Activated CD4-positive, alpha-beta memory T cell treated with anti-CD3 and anti-CD28 coated beads for 36 hours (primary cell): ENCODE measurements at regions of chr6 and their contacts with region 1.

Region 1: GRCh38 chr6:111737065-111737521 is 131.4 kb upstream of the TRAF3IP2 start:
- DNase-seq: peak; percentile 67
- H3K4me3 Mint-ChIP-seq: no peak overlapping the region
- H3K27ac Mint-ChIP-seq: peak overlapping the region; percentile 78
- H3K4me1 Mint-ChIP-seq: peaks cover 88% of the 10 kb centered on the region
- H3K27me3 Mint-ChIP-seq: no peaks in the 10 kb centered on the region

Region 2: GRCh38 chr6:111338843-111339242 is 398.2 kb before region 1 on chr6:
- CTCF ChIA-PET with region 1: no interaction called
- POLR2A ChIA-PET with region 1: no interaction called
- intact Hi-C with region 1: no loop called
- DNase-seq: peak; percentile 11
- H3K4me3 Mint-ChIP-seq: no peak overlapping the region
- H3K27ac Mint-ChIP-seq: peak overlapping the region; percentile 5
- H3K4me1 Mint-ChIP-seq: peaks cover 20% of the 10 kb centered on the region
- H3K27me3 Mint-ChIP-seq: no peaks in the 10 kb centered on the region

Region 3: DNA sequence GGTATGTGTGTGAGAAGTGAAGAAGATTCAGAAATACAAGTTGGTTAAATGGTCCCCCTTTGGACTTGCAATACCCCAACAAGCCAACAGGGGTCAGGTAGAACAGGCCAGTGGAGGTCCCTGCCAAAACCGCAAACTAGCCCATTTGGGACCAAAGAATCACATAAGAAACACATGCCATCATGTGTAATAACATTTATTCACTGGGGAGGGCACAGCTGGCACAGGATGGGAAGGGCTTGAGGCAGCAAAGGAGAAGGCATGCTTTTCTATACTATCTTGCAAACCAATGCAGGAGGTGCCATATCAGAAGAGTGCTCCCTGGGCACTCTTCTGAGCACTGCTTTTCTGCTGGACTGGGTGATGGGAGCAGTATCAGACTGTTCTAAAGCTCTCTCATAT is 15.3 kb before region 1 on chr6:
- CTCF ChIA-PET with region 1: interaction called, 19 read pairs
- POLR2A ChIA-PET with region 1: no interaction called
- intact Hi-C with region 1: no loop called
- DNase-seq: peak; percentile 63
- H3K4me3 Mint-ChIP-seq: no peak overlapping the region
- H3K27ac Mint-ChIP-seq: peak overlapping the region; percentile 65
- H3K4me1 Mint-ChIP-seq: peaks cover 91% of the 10 kb centered on the region
- H3K27me3 Mint-ChIP-seq: no peaks in the 10 kb centered on the region

Region 4: DNA sequence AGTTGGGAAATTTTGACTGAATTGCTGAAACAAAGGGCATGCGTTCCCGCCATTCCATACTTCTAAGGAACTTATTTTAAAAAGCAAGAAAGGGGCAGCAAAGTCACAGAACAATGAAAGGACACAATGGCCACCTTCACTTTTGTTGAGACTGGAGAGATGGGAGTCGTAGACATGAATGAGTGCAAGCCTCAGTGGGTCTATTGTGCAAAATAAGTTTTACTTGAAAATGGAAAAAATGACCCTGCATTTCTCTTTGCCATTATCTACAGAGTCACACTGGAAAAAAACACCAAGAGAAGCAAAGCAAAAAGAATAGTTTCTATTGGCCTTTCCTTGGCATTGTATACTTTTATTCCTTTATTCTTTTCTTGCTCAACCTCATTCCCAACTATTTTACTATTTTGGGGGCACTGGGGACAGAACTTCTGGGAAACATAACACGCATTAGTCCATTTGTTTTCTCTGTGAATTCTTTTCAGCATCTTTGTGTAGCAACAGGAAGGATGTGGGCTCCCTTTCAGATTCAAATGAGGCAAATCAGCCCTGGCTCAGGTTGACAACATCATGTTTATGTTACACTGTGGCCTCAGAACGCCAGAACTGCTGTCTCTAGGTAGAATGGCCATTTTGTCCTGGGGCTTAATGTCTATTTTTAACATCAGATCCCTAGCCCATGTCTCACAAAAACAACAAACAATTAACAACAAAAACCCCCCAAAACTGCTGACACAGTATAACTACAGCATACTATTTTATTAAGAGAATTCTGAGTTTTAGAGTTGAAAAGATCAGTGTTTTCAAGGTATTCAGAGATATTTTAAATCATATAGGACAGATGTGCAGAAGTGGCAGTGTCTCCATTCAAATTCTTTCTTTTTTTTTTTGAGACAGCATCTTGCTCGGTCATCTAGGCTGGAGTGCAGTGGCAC is 13.9 kb after region 1 on chr6:
- CTCF ChIA-PET with region 1: no interaction called
- POLR2A ChIA-PET with region 1: interaction called, 10 read pairs
- intact Hi-C with region 1: loop called (anchors 1 kb)
- DNase-seq: peak; percentile 71
- H3K4me3 Mint-ChIP-seq: peak overlapping the region; percentile 59
- H3K27ac Mint-ChIP-seq: peak overlapping the region; percentile 95
- H3K4me1 Mint-ChIP-seq: peaks cover 93% of the 10 kb centered on the region
- H3K27me3 Mint-ChIP-seq: no peaks in the 10 kb centered on the region